Aorta (tissue), 5 donors: ENCODE measurements at regions of chr1 and their contacts with region 1.

Region 1: GRCh38 chr1:23634842-23635651 is 56.6 kb upstream of the RPL11 start:
- DNase-seq: peak; percentile 62 to 79
- ATAC-seq: peak; percentile 82
- H3K4me3 ChIP-seq: peak overlapping the region; percentile 47 to 54
- H3K27ac ChIP-seq: peak overlapping the region; percentile 78 to 81
- H3K4me1 ChIP-seq: no peaks in the 10 kb centered on the region
- H3K27me3 ChIP-seq: no peaks in the 10 kb centered on the region

Region 2: GRCh38 chr1:23470282-23471071 is 164.6 kb before region 1 on chr1:
- intact Hi-C with region 1: no loop called
- DNase-seq: peak; percentile 81 to 87
- ATAC-seq: peak; percentile 68
- H3K4me3 ChIP-seq: no peak overlapping the region
- H3K27ac ChIP-seq: no peak overlapping the region
- H3K4me1 ChIP-seq: no peaks in the 10 kb centered on the region
- H3K27me3 ChIP-seq: no peaks in the 10 kb centered on the region

Region 3: DNA sequence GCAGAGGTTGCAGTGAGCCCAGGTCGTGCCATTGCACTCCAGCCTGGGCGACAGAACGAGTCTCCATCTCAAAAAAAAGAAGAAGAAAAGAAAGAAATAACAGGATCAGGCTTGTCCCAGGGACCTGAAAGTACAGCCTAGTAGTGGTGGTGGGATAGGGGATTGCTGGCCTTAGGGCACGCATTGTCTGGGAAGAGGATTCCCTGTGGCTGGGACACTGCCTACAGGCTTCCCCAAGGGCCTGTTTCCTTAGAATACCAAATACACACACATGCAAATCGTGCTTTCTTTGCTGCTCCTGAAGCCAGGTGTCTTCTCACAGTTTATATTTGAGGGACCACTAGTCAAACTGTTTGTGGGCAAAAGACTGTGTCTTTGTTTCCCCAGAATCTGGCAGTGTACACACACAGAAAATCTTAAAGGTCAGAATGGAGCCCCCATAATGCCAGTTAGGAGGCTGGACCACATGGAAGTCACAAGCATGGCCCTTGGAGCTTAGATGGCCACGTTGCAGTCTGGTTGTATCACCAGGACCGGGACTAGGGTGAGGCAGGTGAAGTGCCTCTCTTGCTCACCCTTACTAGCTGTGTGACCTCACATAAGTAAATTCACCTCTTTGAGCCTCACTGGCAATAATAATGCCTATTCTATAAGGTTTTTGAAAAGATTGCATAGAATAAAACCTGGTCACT is 138.4 kb before region 1 on chr1:
- intact Hi-C with region 1: loop called (anchors 2 kb)
- DNase-seq: no peak
- ATAC-seq: no peak
- H3K4me3 ChIP-seq: no peak overlapping the region
- H3K27ac ChIP-seq: no peak overlapping the region
- H3K4me1 ChIP-seq: no peaks in the 10 kb centered on the region
- H3K27me3 ChIP-seq: no peaks in the 10 kb centered on the region

Region 4: DNA sequence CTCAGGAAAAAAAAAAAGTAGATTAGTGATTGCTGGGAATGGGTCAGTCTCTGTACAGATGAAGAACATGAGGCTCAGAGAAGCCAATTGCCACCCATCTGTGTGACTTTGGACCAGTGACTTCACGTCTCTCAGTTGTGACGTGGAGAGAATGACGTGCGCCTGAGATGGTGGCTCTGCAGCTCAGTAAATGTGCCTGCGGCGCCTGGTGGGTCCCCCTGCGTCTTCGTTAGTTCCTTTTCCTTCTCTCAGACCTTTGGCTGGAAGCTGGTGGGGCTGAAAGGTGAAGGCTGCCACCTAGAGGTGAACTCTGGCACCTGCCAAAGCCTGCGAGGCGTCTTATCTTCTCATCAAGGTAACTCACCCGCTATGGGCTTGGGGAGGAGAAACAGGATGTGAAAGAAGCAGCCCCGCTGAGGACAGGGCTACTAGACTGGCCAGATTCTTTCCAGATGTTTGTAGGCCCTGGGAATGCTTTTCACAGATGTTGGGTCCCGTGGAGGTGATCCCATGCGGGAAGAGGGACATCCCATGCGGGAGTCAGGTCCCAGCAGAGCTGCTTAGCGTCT is 95.3 kb before region 1 on chr1:
- intact Hi-C with region 1: loop called in 1 of 2 experiments (anchors 1 kb)
- DNase-seq: peak; percentile 90 to 94
- ATAC-seq: peak; percentile 93
- H3K4me3 ChIP-seq: no peak overlapping the region
- H3K27ac ChIP-seq: peak overlapping the region in 1 of 2 donors; percentile 17
- H3K4me1 ChIP-seq: no peaks in the 10 kb centered on the region
- H3K27me3 ChIP-seq: no peaks in the 10 kb centered on the region

Region 5: GRCh38 chr1:23577056-23578004 is 57.7 kb before region 1 on chr1:
- intact Hi-C with region 1: loop called in 1 of 2 experiments (anchors 5 kb)
- DNase-seq: peak in 1 of 2 donors; percentile 74
- ATAC-seq: peak; percentile 80
- H3K4me3 ChIP-seq: peak overlapping the region in 1 of 2 donors; percentile 85
- H3K27ac ChIP-seq: peak overlapping the region; percentile 95 to 100
- H3K4me1 ChIP-seq: peaks cover 2 to 15% of the 10 kb centered on the region in 2 donors
- H3K27me3 ChIP-seq: no peaks in the 10 kb centered on the region